ENCODE measurements at regions of chr12 and their contacts with region 1.

Region 1: GRCh38 chr12:49636979-49637755 is 13.8 kb downstream of the PRPF40B start:
- DNase-seq: peak; percentile 82
- CTCF ChIP-seq: peak; percentile 73

Region 2: GRCh38 chr12:49623142-49623904 is 13.8 kb before region 1 on chr12 and contains the start of gene PRPF40B:
- CTCF ChIA-PET with region 1: interaction called, 163 read pairs
- POLR2A ChIA-PET with region 1: interaction called, 4 read pairs
- DNase-seq: peak; percentile 96
- CTCF ChIP-seq: peak; percentile 70

Region 3: DNA sequence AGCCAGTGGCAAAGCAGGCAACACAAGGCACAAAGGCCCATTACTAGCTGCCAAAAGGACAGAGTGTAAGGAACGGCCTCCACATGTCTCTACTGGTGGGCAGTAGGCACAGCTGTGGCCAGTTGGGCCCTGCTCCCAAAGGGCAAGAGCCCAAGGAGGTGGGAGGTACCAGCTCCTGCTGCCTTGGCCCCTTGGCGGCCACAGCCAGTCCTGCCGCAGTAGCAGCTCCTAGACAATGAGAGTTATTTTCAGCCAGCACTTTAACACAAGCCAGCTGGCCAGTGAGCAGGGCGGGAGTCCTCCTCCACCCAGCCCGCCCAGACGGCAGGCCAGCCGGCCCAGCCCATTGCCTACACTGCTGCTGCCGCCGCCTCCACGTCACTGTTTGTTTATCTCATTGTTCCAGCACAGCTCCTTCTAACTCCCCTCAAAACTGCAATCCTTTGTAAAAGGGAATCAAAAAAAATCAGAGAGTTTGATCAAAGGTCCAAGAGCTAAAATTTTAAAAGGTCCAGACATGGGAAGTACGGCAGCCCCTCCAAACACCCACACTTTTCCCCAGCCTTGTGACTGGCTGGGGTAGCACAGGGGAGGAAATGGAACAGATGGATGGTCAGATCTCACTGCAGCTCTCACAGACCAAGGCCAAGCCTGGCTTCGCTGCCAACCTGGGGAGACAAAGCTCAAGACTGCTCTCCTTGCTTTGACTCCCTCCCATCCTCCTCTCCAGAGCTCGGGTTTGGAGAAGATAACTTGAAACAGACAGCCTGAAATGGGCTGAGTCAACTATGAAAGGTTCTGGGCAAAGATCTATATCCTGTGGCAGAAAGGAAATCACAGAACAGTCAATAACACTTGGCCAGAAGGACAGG is 36.5 kb after region 1 on chr12:
- CTCF ChIA-PET with region 1: interaction called, 29 read pairs
- POLR2A ChIA-PET with region 1: interaction called, 3 read pairs
- DNase-seq: peak; percentile 36
- CTCF ChIP-seq: no peak

Region 4: DNA sequence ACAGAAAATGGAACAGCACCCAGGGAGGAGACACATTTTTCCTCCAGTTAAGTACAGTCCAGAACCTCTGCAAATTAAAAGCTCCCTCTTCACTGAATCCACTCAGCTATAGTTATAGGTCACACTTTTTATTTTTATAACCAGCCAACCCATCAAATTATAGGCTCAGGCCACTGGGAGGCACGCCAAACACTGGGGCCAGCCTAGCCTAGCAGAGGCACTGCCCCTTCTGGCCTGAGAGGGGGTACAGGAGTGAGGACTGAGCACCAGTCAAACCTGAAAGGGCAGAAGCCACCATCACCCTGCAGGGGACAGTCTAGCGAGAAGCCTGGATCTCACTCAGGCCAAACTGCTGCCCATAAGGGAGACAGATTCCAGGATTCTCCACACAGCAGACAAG is 50.8 kb after region 1 on chr12:
- CTCF ChIA-PET with region 1: interaction called, 21 read pairs
- POLR2A ChIA-PET with region 1: no interaction called
- DNase-seq: no peak
- CTCF ChIP-seq: no peak

Region 5: DNA sequence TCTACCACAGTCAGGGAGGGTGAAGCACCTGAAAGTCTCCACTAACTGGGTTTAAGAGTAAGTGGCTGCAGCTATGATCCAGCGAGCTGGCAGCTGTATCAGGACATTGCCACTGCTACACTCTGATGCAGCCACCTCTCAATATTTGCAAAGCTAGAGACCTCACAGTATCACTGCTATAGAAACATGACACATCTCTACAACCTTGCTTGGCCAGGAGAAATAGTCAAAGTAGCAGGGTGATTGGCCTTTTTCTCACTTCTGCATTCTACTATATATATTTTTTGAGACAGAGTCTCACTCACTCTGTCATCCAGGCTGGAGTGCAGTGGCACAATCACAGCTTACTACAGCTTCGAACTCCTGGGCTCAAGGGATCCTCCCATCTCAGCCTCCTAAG is 79.4 kb after region 1 on chr12:
- CTCF ChIA-PET with region 1: interaction called, 350 read pairs
- POLR2A ChIA-PET with region 1: no interaction called
- DNase-seq: peak; percentile 59
- CTCF ChIP-seq: no peak